ENCODE measurements at regions of chr15 and their contacts with region 1.

Region 1: DNA sequence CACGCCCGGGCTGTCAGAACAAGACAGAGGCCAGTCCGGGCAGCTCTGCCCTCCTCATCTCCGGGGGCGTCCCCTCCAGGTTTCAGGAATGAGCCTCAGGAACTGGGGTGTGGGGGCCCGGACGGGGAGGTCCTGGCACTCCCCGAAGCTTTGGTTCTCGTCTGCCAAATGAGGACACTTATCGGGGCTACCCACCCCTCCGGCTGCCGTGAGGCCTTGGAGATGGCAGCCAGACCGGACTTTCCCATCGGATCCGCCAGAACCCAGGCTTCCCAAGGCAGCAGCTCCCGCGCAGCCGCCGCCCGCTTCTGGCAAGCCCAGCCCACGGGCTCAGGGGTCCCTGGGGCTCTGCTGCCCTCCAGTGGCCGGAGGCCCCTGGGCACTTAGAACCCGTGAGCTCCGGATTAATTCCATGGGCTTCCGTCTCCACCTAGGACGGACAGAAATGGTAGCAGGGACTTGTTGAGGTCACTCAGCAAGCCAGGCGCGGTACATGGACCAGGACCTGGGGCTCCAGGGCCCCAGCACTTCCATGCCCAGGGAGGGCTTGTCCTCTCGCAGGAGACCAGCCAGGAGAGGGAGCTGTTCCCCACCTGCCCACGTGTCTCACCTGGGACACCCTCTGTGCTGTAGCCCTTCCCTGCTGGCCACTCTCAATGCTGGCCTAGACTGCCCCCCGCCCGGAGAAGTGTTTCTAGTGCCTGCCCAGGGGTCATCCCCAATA is 89.4 kb downstream of the LINGO1 start:
- DNase-seq: peak; percentile 82
- ATAC-seq: peak; percentile 96
- H3K4me3 Mint-ChIP-seq: peak overlapping the region; percentile 77
- H3K27ac Mint-ChIP-seq: peak overlapping the region; percentile 57
- H3K4me1 Mint-ChIP-seq: peaks cover 11% of the 10 kb centered on the region
- H3K27me3 Mint-ChIP-seq: no peaks in the 10 kb centered on the region

Region 2: DNA sequence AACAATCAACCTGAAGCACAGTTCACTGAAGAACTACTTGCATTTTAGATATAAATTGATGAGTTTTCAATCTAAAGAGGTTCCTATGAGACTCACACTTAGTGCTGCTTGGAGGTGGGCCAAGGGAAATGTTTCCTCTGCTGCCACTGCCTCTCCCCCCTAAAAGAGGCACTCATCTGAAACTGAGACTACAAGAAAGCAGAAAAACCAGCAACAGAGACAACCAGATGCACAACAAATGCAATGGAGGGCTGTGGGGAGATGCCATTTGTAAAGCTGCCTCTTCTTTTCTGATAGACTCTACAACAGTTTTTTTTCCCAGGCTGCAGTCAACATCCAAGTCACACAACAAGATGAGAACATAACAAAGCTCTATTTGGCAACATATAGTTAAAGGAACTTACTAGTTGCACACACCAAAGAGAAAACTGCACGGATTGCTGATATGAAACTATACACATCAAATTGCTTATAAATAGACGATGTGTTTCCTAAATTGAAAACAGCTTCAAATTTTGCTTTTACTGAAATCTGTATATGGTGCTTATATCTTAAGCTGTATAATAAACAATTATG is 483.4 kb before region 1 on chr15:
- CTCF ChIA-PET with region 1: interaction called, 16 read pairs
- POLR2A ChIA-PET with region 1: no interaction called
- DNase-seq: no peak
- ATAC-seq: no peak
- H3K4me3 Mint-ChIP-seq: no peak overlapping the region
- H3K27ac Mint-ChIP-seq: peak overlapping the region; percentile 35
- H3K4me1 Mint-ChIP-seq: peaks cover 14% of the 10 kb centered on the region
- H3K27me3 Mint-ChIP-seq: no peaks in the 10 kb centered on the region

Region 3: DNA sequence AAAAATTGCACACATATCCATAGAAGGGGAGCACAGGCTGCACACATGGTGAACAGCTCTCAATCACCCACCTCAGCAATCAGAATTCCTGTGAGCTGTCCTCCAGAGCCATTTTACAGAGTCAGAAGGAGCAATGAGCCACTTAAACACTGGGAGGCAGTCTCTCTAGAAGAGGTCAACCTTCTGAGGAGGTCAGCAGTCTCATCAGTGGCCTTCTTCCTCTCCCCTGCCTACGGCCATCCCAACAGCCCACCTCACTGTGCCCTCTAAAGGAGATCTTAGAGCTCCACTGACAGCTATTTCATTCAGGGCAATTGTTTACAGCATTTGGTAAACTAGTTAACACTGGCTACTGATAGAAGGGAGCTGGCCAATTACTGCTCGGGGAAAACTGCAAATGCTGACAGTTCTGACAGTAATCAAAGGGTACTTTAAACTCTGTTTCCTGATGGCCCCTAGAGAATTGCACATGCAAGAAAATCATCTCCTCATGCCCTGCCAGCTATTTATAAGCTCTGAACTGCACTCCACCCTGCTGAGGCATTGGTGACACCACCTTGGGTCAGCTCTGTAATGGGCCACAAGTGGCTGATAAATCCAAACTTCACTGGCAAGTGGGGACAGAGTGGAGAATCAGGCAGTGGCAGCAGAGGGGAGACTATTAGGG is 430.4 kb before region 1 on chr15:
- CTCF ChIA-PET with region 1: interaction called, 96 read pairs
- POLR2A ChIA-PET with region 1: interaction called, 3 read pairs
- DNase-seq: no peak
- ATAC-seq: no peak
- H3K4me3 Mint-ChIP-seq: no peak overlapping the region
- H3K27ac Mint-ChIP-seq: no peak overlapping the region
- H3K4me1 Mint-ChIP-seq: no peaks in the 10 kb centered on the region
- H3K27me3 Mint-ChIP-seq: no peaks in the 10 kb centered on the region

Region 4: GRCh38 chr15:77126529-77127326 is 416.6 kb before region 1 on chr15:
- CTCF ChIA-PET with region 1: interaction called, 16 read pairs
- POLR2A ChIA-PET with region 1: no interaction called
- DNase-seq: no peak
- ATAC-seq: no peak
- H3K4me3 Mint-ChIP-seq: no peak overlapping the region
- H3K27ac Mint-ChIP-seq: no peak overlapping the region
- H3K4me1 Mint-ChIP-seq: peaks cover 9% of the 10 kb centered on the region
- H3K27me3 Mint-ChIP-seq: no peaks in the 10 kb centered on the region

Region 5: DNA sequence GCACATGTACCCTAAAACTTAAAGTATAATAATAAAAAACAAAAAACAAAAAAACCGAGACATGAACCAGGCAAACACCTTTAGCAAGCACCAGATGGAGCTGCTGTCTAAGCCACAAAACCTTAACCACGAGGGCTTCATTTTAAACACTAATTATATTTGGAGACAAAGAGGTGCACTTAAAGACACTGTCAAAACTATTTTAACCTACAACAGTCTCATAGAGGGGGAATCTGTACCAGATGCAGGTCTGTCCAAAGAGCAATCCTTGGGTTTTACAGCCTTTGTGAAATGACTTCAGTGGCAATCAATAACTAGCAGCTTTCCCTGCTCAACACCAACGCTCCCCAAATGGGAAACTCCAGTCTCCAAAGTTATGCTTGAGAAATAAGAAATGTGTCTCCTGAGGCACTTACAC is 356.7 kb before region 1 on chr15:
- CTCF ChIA-PET with region 1: interaction called, 216 read pairs
- POLR2A ChIA-PET with region 1: no interaction called
- DNase-seq: peak; percentile 31
- ATAC-seq: no peak
- H3K4me3 Mint-ChIP-seq: no peak overlapping the region
- H3K27ac Mint-ChIP-seq: no peak overlapping the region
- H3K4me1 Mint-ChIP-seq: peaks cover 48% of the 10 kb centered on the region
- H3K27me3 Mint-ChIP-seq: no peaks in the 10 kb centered on the region

Region 6: DNA sequence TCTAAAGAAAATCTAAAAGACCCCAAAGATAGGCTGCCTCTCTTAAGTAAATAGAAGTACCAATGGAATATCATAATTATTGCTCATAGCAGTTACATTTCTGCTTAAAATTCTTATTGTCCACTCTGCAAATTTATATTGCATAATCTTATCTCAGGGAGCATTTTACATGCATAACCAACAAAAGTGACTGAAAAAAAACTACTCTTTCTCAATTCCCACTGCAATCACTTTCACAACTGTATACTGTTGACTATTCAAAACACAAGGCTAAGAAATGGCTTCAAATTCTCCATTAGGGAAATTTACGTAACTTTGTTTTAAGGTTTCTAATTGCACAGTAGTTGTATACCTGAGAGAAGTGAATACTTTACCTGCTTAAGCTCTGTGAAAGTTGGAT is 66.3 kb before region 1 on chr15:
- CTCF ChIA-PET with region 1: interaction called, 13 read pairs
- POLR2A ChIA-PET with region 1: no interaction called
- DNase-seq: no peak
- ATAC-seq: no peak
- H3K4me3 Mint-ChIP-seq: no peak overlapping the region
- H3K27ac Mint-ChIP-seq: no peak overlapping the region
- H3K4me1 Mint-ChIP-seq: peaks cover 7% of the 10 kb centered on the region
- H3K27me3 Mint-ChIP-seq: no peaks in the 10 kb centered on the region

Region 7: GRCh38 chr15:77496710-77497103 is 46.6 kb before region 1 on chr15:
- CTCF ChIA-PET with region 1: interaction called, 35 read pairs
- POLR2A ChIA-PET with region 1: no interaction called
- DNase-seq: peak; percentile 76
- ATAC-seq: peak; percentile 86
- H3K4me3 Mint-ChIP-seq: no peak overlapping the region
- H3K27ac Mint-ChIP-seq: no peak overlapping the region
- H3K4me1 Mint-ChIP-seq: peaks cover 20% of the 10 kb centered on the region
- H3K27me3 Mint-ChIP-seq: no peaks in the 10 kb centered on the region